ENCODE measurements at regions of chr2 and their contacts with region 1.

Region 1: GRCh38 chr2:96296925-96297324 is 8.4 kb downstream of the SNRNP200 start:
- DNase-seq: no peak
- H3K4me3 ChIP-seq: no peak overlapping the region
- H3K4me3 Mint-ChIP-seq: no peak overlapping the region
- H3K27ac ChIP-seq: no peak overlapping the region
- H3K27ac Mint-ChIP-seq: no peak overlapping the region
- H3K4me1 ChIP-seq: peaks cover 10% of the 10 kb centered on the region
- H3K4me1 Mint-ChIP-seq: peaks cover 19 to 24% (median 20%) of the 10 kb centered on the region in 3 donors
- H3K27me3 ChIP-seq: no peaks in the 10 kb centered on the region
- H3K27me3 Mint-ChIP-seq: no peaks in the 10 kb centered on the region

Region 2: GRCh38 chr2:96315400-96316071 is 18.6 kb after region 1 on chr2:
- CTCF ChIA-PET with region 1: no interaction called
- POLR2A ChIA-PET with region 1: no interaction called
- DNase-seq: peak in 2 of 5 donors; percentile 13 to 18
- H3K4me3 ChIP-seq: no peak overlapping the region
- H3K4me3 Mint-ChIP-seq: peak overlapping the region; percentile 52 to 89 (median 72)
- H3K27ac ChIP-seq: no peak overlapping the region
- H3K27ac Mint-ChIP-seq: peak overlapping the region; percentile 87 to 98 (median 92)
- H3K4me1 ChIP-seq: peaks cover 18% of the 10 kb centered on the region
- H3K4me1 Mint-ChIP-seq: peaks cover 42 to 67% (median 57%) of the 10 kb centered on the region in 3 donors
- H3K27me3 ChIP-seq: no peaks in the 10 kb centered on the region
- H3K27me3 Mint-ChIP-seq: no peaks in the 10 kb centered on the region

Region 3: GRCh38 chr2:96330407-96330806 is 33.5 kb after region 1 on chr2:
- CTCF ChIA-PET with region 1: no interaction called
- POLR2A ChIA-PET with region 1: interaction called, 12 read pairs
- DNase-seq: no peak
- H3K4me3 ChIP-seq: no peak overlapping the region
- H3K4me3 Mint-ChIP-seq: peak overlapping the region in 1 of 7 donors; percentile 66
- H3K27ac ChIP-seq: no peak overlapping the region
- H3K27ac Mint-ChIP-seq: peak overlapping the region in 1 of 8 donors; percentile 50
- H3K4me1 ChIP-seq: peaks cover 19% of the 10 kb centered on the region
- H3K4me1 Mint-ChIP-seq: peaks cover 46 to 69% (median 65%) of the 10 kb centered on the region in 3 donors
- H3K27me3 ChIP-seq: no peaks in the 10 kb centered on the region
- H3K27me3 Mint-ChIP-seq: no peaks in the 10 kb centered on the region